Motor neuron (in vitro differentiated cells): ENCODE measurements at regions of chr16 and their contacts with region 1.

Region 1: GRCh38 chr16:22070361-22071330 is 21.7 kb upstream of the VWA3A start:
- ATAC-seq: peak in 1 of 8 experiments; percentile 15
- H3K4me3 ChIP-seq: no peak overlapping the region
- H3K27ac ChIP-seq: no peak overlapping the region
- H3K4me1 ChIP-seq: no peaks in the 10 kb centered on the region

Region 2: GRCh38 chr16:22161999-22162655 is 91.5 kb after region 1 on chr16 and contains the start of gene SDR42E2:
- in situ Hi-C with region 1: loop called in 1 of 9 experiments (anchors 25 kb)
- ATAC-seq: peak in 1 of 8 experiments; percentile 59
- H3K4me3 ChIP-seq: no peak within 1 kb of the TSS
- H3K27ac ChIP-seq: no peak within 1 kb of the TSS
- H3K4me1 ChIP-seq: no peaks in the 10 kb centered on the region
- total RNA-seq, gene SDR42E2: 0.05 to 0.81 (median 0.17) TPM